ENCODE measurements at regions of chr6 and their contacts with region 1.

Region 1: GRCh38 chr6:34757687-34758274 is 476 bp downstream of the SNRPC start:
- DNase-seq: no peak
- H3K4me3 ChIP-seq: peak overlapping the region; percentile 73 to 100 (median 100)
- H3K27ac ChIP-seq: peak overlapping the region; percentile 94
- H3K4me1 ChIP-seq: peaks cover 5% of the 10 kb centered on the region
- H3K27me3 ChIP-seq: no peaks in the 10 kb centered on the region
- CTCF ChIP-seq: no peak

Region 2: GRCh38 chr6:34491091-34491430 is 266.7 kb before region 1 on chr6:
- CTCF ChIA-PET with region 1: no interaction called
- dilution Hi-C with region 1: no loop called
- in situ Hi-C with region 1: no loop called
- intact Hi-C with region 1: no loop called
- DNase-seq: no peak
- H3K4me3 ChIP-seq: no peak overlapping the region
- H3K27ac ChIP-seq: no peak overlapping the region
- H3K4me1 ChIP-seq: no peaks in the 10 kb centered on the region
- H3K27me3 ChIP-seq: no peaks in the 10 kb centered on the region
- CTCF ChIP-seq: no peak

Region 3: GRCh38 chr6:34656378-34657036 is 101.3 kb before region 1 on chr6:
- CTCF ChIA-PET with region 1: no interaction called
- dilution Hi-C with region 1: no loop called
- in situ Hi-C with region 1: loop called in 1 of 2 experiments (anchors 5 kb)
- intact Hi-C with region 1: loop called (anchors 10 kb)
- DNase-seq: peak; percentile 30
- H3K4me3 ChIP-seq: peak overlapping the region in 2 of 3 experiments; percentile 45 to 53
- H3K27ac ChIP-seq: peak overlapping the region; percentile 91
- H3K4me1 ChIP-seq: peaks cover 12% of the 10 kb centered on the region
- H3K27me3 ChIP-seq: no peaks in the 10 kb centered on the region
- CTCF ChIP-seq: no peak

Region 4: GRCh38 chr6:34696739-34697543 is 60.8 kb before region 1 on chr6 and contains the start of gene ILRUN:
- CTCF ChIA-PET with region 1: interaction called, 6 read pairs
- dilution Hi-C with region 1: no loop called
- in situ Hi-C with region 1: no loop called
- intact Hi-C with region 1: loop called (anchors 1 kb)
- DNase-seq: peak; percentile 93
- H3K4me3 ChIP-seq: peak within 1 kb of the TSS; percentile 87 to 97 (median 91)
- H3K27ac ChIP-seq: peak within 1 kb of the TSS; percentile 80
- H3K4me1 ChIP-seq: peaks cover 17% of the 10 kb centered on the region
- H3K27me3 ChIP-seq: no peaks in the 10 kb centered on the region
- CTCF ChIP-seq: no peak
- total RNA-seq, gene ILRUN: 40.0 to 67.3 TPM

Region 5: DNA sequence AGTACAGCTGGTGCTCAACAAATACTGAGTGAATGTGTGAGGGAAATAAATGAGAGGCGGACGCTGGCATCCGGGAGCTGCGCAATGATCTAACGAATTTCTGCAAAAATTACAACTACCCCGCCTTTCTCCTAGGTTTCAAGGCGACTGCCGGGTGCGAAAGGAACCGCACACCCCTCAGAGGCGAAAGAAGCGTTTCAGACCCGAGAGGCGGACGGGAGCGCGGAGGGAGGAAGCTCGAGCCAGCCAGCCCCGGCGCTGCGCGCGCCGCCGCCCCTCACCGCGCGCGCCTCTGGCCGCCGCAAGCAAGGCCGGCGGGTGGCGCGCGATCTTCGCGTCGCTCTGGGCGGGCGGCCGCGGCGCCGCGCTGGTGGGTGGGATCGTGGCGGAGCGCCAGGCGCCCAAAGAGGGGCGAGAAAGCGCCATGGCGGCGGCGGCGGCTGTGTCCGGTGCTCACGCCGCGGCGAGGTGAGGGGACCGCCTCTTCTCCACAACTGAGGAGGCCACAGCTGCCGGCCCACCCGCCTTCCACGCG is 34.0 kb after region 1 on chr6 and contains the start of gene BLTP3A:
- CTCF ChIA-PET with region 1: no interaction called
- dilution Hi-C with region 1: no loop called
- in situ Hi-C with region 1: no loop called
- intact Hi-C with region 1: loop called (anchors 2 kb)
- DNase-seq: peak; percentile 50
- H3K4me3 ChIP-seq: peak within 1 kb of the TSS; percentile 57 to 86 (median 83)
- H3K27ac ChIP-seq: peak within 1 kb of the TSS; percentile 58
- H3K4me1 ChIP-seq: peaks cover 12% of the 10 kb centered on the region
- H3K27me3 ChIP-seq: no peaks in the 10 kb centered on the region
- CTCF ChIP-seq: no peak
- total RNA-seq, gene BLTP3A: 9.6 to 19.2 TPM

Region 6: GRCh38 chr6:34887753-34888513 is 130.2 kb after region 1 on chr6 and contains the start of gene TAF11:
- CTCF ChIA-PET with region 1: no interaction called
- dilution Hi-C with region 1: no loop called
- in situ Hi-C with region 1: no loop called
- intact Hi-C with region 1: loop called (anchors 1 kb)
- DNase-seq: peak; percentile 92
- H3K4me3 ChIP-seq: peak within 1 kb of the TSS; percentile 61 to 98 (median 78)
- H3K27ac ChIP-seq: peak within 1 kb of the TSS; percentile 89
- H3K4me1 ChIP-seq: peaks cover 14% of the 10 kb centered on the region
- H3K27me3 ChIP-seq: no peaks in the 10 kb centered on the region
- CTCF ChIP-seq: no peak
- total RNA-seq, gene TAF11: 11.0 to 16.4 TPM

Region 7: GRCh38 chr6:34901930-34902329 is 144.1 kb after region 1 on chr6:
- CTCF ChIA-PET with region 1: no interaction called
- dilution Hi-C with region 1: no loop called
- in situ Hi-C with region 1: no loop called
- intact Hi-C with region 1: no loop called
- DNase-seq: no peak
- H3K4me3 ChIP-seq: no peak overlapping the region
- H3K27ac ChIP-seq: no peak overlapping the region
- H3K4me1 ChIP-seq: no peaks in the 10 kb centered on the region
- H3K27me3 ChIP-seq: no peaks in the 10 kb centered on the region
- CTCF ChIP-seq: no peak

Region 8: GRCh38 chr6:35139908-35140655 is 382.3 kb after region 1 on chr6:
- CTCF ChIA-PET with region 1: no interaction called
- dilution Hi-C with region 1: no loop called
- in situ Hi-C with region 1: no loop called
- intact Hi-C with region 1: loop called (anchors 10 kb)
- DNase-seq: peak; percentile 36
- H3K4me3 ChIP-seq: no peak overlapping the region
- H3K27ac ChIP-seq: no peak overlapping the region
- H3K4me1 ChIP-seq: no peaks in the 10 kb centered on the region
- H3K27me3 ChIP-seq: no peaks in the 10 kb centered on the region
- CTCF ChIP-seq: peak; percentile 87 to 89

Measured in mammary epithelial cell (primary cell).